GM12878 (cell line): ENCODE measurements at regions of chr22 and their contacts with region 1.

Region 1: GRCh38 chr22:29040385-29041275 is 21.0 kb downstream of the C22orf31 start:
- DNase-seq: peak; percentile 36
- ATAC-seq: peak; percentile 92
- H3K4me3 ChIP-seq: no peak overlapping the region
- H3K27ac ChIP-seq: no peak overlapping the region
- H3K4me1 ChIP-seq: no peaks in the 10 kb centered on the region
- H3K27me3 ChIP-seq: no peaks in the 10 kb centered on the region
- CTCF ChIP-seq: peak; percentile 92 to 98 (median 94)
- EP300 ChIP-seq: no peak
- POLR2A ChIP-seq: no peak
- RAD21 ChIP-seq: peak; percentile 97

Region 2: GRCh38 chr22:28791841-28792490 is 248.7 kb before region 1 on chr22:
- CTCF ChIA-PET with region 1: interaction called, 19 read pairs
- POLR2A ChIA-PET with region 1: interaction called, 3 read pairs
- RAD21 ChIA-PET with region 1: interaction called, 9 read pairs
- SMC1A ChIA-PET with region 1: interaction called, 12 read pairs
- in situ Hi-C with region 1: no loop called
- intact Hi-C with region 1: no loop called
- DNase-seq: peak; percentile 80
- ATAC-seq: peak; percentile 77
- H3K4me3 ChIP-seq: no peak overlapping the region
- H3K27ac ChIP-seq: peak overlapping the region; percentile 64
- H3K4me1 ChIP-seq: peaks cover 46% of the 10 kb centered on the region
- H3K27me3 ChIP-seq: no peaks in the 10 kb centered on the region
- CTCF ChIP-seq: no peak
- EP300 ChIP-seq: peak in 1 of 2 experiments; percentile 82; a peak in 3 of 4 replicates
- POLR2A ChIP-seq: no peak
- RAD21 ChIP-seq: no peak

Region 3: DNA sequence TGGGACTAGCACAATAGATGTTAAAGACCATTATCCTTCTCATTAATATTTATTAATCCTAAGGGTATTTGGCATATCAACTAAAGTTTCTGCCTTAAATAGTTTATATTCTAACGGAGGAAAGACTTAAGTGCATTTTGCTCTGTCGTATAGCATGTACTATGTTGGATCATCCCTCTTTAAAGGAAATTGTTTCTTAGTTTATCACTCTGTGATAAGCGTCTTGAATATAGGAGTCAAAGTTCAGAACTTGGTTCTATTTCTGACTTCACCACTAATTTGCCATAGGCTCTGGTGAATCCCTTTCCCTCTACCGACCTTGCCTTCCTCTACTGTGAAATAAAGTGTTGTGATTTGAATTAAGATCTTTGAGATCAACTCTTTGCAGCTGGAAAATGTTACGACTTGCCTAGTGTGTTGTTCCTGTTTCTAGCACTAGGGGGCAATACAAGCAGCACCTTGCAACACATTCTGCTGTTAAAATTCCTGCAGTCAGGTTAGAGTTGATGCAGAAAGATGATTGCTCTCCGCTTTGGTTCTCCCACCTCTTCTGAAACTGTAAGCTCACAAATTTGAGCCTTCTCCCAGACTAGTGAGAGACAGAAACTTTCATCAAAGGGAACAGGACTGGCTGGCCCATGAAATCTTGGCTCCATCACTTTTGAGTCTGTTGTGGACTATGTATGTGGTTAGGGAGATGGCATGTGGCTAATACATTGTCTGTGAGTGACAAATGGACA is 185.1 kb before region 1 on chr22:
- CTCF ChIA-PET with region 1: interaction called, 195 read pairs
- POLR2A ChIA-PET with region 1: interaction called, 4 read pairs
- RAD21 ChIA-PET with region 1: interaction called, 119 read pairs
- SMC1A ChIA-PET with region 1: interaction called, 187 read pairs
- in situ Hi-C with region 1: loop called (anchors 5 kb)
- intact Hi-C with region 1: loop called (anchors 1 kb)
- DNase-seq: peak; percentile 27
- ATAC-seq: peak; percentile 79
- H3K4me3 ChIP-seq: no peak overlapping the region
- H3K27ac ChIP-seq: no peak overlapping the region
- H3K4me1 ChIP-seq: no peaks in the 10 kb centered on the region
- H3K27me3 ChIP-seq: no peaks in the 10 kb centered on the region; a peak in 1 of 4 replicates
- CTCF ChIP-seq: peak; percentile 85 to 90 (median 87); a peak in 5 of 6 replicates
- EP300 ChIP-seq: no peak
- POLR2A ChIP-seq: no peak
- RAD21 ChIP-seq: peak; percentile 94

Region 4: GRCh38 chr22:28917747-28918549 is 122.7 kb before region 1 on chr22:
- CTCF ChIA-PET with region 1: interaction called, 87 read pairs
- POLR2A ChIA-PET with region 1: interaction called, 4 read pairs
- RAD21 ChIA-PET with region 1: interaction called, 84 read pairs
- SMC1A ChIA-PET with region 1: interaction called, 70 read pairs
- in situ Hi-C with region 1: no loop called
- intact Hi-C with region 1: no loop called
- DNase-seq: no peak
- ATAC-seq: peak; percentile 27
- H3K4me3 ChIP-seq: no peak overlapping the region
- H3K27ac ChIP-seq: no peak overlapping the region
- H3K4me1 ChIP-seq: peaks cover 8% of the 10 kb centered on the region
- H3K27me3 ChIP-seq: no peaks in the 10 kb centered on the region; a peak in 1 of 4 replicates
- CTCF ChIP-seq: no peak; a peak in 1 of 6 replicates
- EP300 ChIP-seq: no peak
- POLR2A ChIP-seq: no peak
- RAD21 ChIP-seq: no peak

Region 5: GRCh38 chr22:28989035-28989464 is 51.6 kb before region 1 on chr22:
- CTCF ChIA-PET with region 1: interaction called, 12 read pairs
- POLR2A ChIA-PET with region 1: no interaction called
- RAD21 ChIA-PET with region 1: interaction called, 9 read pairs
- SMC1A ChIA-PET with region 1: interaction called, 3 read pairs
- in situ Hi-C with region 1: no loop called
- intact Hi-C with region 1: no loop called
- DNase-seq: no peak
- ATAC-seq: peak; percentile 58
- H3K4me3 ChIP-seq: no peak overlapping the region
- H3K27ac ChIP-seq: no peak overlapping the region
- H3K4me1 ChIP-seq: no peaks in the 10 kb centered on the region
- H3K27me3 ChIP-seq: no peaks in the 10 kb centered on the region
- CTCF ChIP-seq: no peak
- EP300 ChIP-seq: 0 out of 4 replicates have a peak, but pooled peaks of 1 of the 2 experiments have one; percentile 9
- POLR2A ChIP-seq: no peak
- RAD21 ChIP-seq: no peak

Region 6: GRCh38 chr22:29154364-29155048 is 113.9 kb after region 1 on chr22:
- CTCF ChIA-PET with region 1: interaction called, 67 read pairs
- POLR2A ChIA-PET with region 1: no interaction called
- RAD21 ChIA-PET with region 1: interaction called, 24 read pairs
- SMC1A ChIA-PET with region 1: interaction called, 23 read pairs
- in situ Hi-C with region 1: no loop called
- intact Hi-C with region 1: loop called (anchors 10 kb)
- DNase-seq: no peak
- ATAC-seq: peak; percentile 86
- H3K4me3 ChIP-seq: no peak overlapping the region
- H3K27ac ChIP-seq: no peak overlapping the region
- H3K4me1 ChIP-seq: peaks cover 8% of the 10 kb centered on the region
- H3K27me3 ChIP-seq: no peaks in the 10 kb centered on the region; a peak in 1 of 4 replicates
- CTCF ChIP-seq: peak; percentile 86 to 97 (median 89)
- EP300 ChIP-seq: 0 out of 4 replicates have a peak, but pooled peaks of 1 of the 2 experiments have one; percentile 14
- POLR2A ChIP-seq: no peak
- RAD21 ChIP-seq: peak; percentile 80